GM12878 (cell line): ENCODE measurements at regions of chr7 and their contacts with region 1.

Region 1: DNA sequence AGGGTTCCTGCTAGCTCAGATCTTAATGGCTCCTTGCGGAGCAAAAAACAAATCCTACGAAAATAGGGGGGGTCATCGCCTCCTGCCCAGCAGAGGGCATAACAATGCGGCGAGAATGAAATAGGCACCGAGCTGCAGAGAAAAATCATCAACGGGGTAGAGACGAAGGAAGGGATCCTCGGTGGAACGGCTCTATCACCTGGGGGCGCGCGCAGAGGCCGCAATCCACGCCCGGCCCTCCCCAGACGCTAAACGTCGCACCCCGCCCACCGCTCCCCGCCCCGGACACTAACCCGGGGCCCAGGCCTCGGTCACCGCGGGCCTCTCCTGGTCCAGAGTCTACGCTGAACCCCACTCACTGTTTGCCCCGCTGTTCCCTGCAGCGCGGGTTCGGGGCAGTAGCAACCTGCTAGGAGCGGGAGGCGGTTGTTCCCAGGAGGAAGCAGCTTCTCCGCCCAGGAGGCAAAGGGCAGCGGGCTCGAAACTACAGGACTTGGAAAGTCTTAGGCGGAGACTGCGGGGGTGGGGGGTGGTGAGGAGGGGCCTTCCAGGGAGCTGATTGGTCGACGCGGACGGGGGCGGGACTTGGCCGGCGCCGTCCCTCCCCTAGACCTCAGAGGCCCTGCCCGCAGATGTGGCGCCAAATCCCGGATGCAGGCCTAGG is at the start of gene TCAF1:
- DNase-seq: peak; percentile 55
- ATAC-seq: peak; percentile 96
- H3K4me3 ChIP-seq: peak within 1 kb of the TSS; percentile 87
- H3K27ac ChIP-seq: peak within 1 kb of the TSS; percentile 86
- H3K4me1 ChIP-seq: no peaks in the 10 kb centered on the region
- H3K27me3 ChIP-seq: no peaks in the 10 kb centered on the region
- CTCF ChIP-seq: peak; percentile 25 to 40 (median 38); a peak in 5 of 6 replicates
- EP300 ChIP-seq: no peak
- POLR2A ChIP-seq: peak; percentile 81
- RAD21 ChIP-seq: peak; percentile 32
- polyA plus RNA-seq, gene TCAF1: 2.2 to 3.2 TPM

Region 2: DNA sequence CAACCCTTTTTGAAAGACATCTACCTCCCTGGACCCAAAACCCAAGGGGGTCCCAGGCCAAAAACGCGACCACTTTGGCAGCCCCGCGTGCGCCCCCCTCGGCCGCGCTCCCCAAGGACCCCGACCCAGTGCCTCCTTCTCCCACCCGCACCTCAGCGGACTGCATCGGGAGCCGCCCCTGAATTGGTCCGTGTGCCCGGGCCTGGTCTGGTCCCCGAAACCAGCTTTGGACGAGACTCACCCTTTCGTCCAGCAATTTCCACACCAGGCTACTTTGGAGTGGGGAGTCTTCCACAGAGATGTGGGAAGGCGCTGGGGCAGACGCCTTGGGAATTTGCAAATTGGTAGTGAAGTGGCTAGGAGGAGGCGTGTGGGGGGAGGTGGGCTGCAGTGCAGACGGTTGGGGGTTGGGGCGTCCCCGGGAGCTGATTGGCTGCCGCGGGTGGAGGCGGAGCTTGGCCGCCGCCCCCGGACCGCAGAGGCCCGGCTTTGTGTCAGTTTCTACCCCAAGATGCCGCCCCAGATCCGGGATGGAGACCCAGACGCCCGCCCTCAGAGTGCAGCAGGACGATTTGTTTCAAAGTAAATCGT is 16.7 kb before region 1 on chr7:
- CTCF ChIA-PET with region 1: interaction called, 65 read pairs
- POLR2A ChIA-PET with region 1: interaction called, 14 read pairs
- RAD21 ChIA-PET with region 1: interaction called, 4 read pairs
- SMC1A ChIA-PET with region 1: interaction called, 8 read pairs
- in situ Hi-C with region 1: no loop called
- intact Hi-C with region 1: no loop called
- DNase-seq: no peak
- ATAC-seq: peak; percentile 92
- H3K4me3 ChIP-seq: peak overlapping the region; percentile 53; the same call in 1 of the 2 replicates
- H3K27ac ChIP-seq: no peak overlapping the region
- H3K4me1 ChIP-seq: peaks cover 6% of the 10 kb centered on the region; the same call in 1 of the 2 replicates
- H3K27me3 ChIP-seq: no peaks in the 10 kb centered on the region
- CTCF ChIP-seq: no peak
- EP300 ChIP-seq: no peak
- POLR2A ChIP-seq: no peak
- RAD21 ChIP-seq: no peak

Region 3: DNA sequence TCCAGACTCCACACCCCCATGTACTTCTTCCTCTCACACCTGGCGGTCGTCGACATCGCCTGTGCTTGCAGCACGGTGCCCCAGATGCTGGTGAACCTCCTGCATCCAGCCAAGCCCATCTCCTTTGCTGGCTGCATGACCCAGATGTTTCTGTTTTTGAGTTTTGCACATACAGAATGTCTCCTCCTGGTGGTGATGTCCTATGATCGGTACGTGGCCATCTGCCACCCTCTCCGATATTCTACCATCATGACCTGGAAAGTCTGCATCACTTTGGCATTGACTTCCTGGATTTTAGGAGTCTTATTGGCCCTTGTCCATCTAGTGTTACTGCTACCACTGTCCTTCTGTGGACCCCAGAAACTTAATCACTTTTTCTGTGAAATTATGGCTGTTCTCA is 172.6 kb after region 1 on chr7:
- CTCF ChIA-PET with region 1: no interaction called
- POLR2A ChIA-PET with region 1: no interaction called
- RAD21 ChIA-PET with region 1: no interaction called
- SMC1A ChIA-PET with region 1: no interaction called
- in situ Hi-C with region 1: no loop called
- intact Hi-C with region 1: no loop called
- DNase-seq: no peak
- ATAC-seq: no peak
- H3K4me3 ChIP-seq: no peak overlapping the region
- H3K27ac ChIP-seq: no peak overlapping the region
- H3K4me1 ChIP-seq: no peaks in the 10 kb centered on the region
- H3K27me3 ChIP-seq: 0 out of 4 replicates have a peak, but pooled peaks cover 0 to 3% of the 10 kb centered on the region in 2 experiments
- CTCF ChIP-seq: no peak
- EP300 ChIP-seq: no peak
- POLR2A ChIP-seq: no peak
- RAD21 ChIP-seq: no peak